BJ (cell line): ENCODE measurements at regions of chr19 and their contacts with region 1.

Region 1: DNA sequence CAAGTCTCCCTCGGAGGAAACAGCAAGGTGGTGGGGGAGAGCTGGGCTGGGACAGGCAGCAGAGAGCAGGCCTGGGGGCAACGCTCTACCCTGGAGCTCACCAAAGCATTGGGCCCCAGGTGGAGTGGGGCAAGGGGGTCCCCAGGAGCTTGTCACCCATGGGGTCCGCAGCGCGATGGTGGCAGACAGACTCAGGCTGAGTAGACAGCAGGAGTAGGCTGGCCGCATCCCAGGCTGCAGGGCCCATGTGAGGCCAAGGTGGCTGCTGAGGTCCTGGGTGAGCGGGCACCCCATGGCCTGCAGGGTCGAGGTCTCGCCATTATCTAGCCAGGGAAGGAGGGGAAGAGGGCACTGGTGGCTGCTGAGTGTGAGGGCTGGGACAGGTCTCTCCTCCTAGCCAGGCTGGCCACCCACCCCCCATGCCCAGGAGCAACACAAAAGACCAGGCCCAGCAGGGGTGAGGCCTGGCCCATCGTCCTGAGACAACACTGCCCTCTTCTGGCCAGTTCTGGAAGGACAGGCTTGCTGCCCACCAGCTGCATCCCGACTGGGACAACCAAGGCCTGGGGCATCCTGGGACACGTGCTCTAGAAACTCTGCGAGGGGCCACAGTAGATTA is 33.1 kb downstream of the CEBPG start:
- DNase-seq: no peak
- H3K4me3 ChIP-seq: no peak overlapping the region
- H3K27me3 ChIP-seq: no peaks in the 10 kb centered on the region
- CTCF ChIP-seq: peak; percentile 96

Region 2: DNA sequence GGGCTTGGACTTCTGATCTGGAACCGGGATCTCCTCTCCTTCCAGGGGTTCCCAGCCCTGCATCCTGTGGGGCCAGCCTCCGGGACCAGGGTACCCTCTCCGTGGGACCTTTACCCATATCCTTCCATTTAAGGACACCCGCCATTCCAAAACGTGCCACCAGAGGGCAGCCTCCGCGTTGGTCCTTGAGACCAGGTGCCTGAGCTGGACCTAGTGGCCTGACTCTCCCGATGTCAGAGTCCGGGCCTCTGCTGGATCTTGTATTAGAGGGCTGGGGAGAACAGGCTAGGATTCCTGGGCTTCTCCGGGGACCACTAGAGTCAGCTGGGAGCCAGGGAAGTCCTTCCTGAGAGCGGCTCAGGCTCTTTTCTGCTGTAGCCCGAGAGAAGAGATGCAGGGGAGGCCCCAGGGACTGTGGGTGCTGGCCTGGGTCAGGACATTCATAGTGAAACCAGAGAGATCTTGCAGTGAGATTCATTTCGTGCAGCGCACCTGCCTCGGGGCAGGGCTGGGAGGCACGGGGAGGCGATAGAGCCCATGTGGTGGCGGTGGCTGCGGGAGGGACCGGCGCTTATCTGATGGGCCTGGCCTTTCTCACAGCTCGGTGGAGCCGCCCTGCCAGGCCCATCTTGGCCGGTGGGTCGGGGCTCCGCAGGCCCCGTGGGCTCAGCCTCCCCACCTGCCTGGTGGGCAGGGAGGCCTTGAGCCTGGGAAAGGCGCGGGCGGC is 171.2 kb before region 1 on chr19:
- CTCF ChIA-PET with region 1: interaction called, 405 read pairs
- POLR2A ChIA-PET with region 1: no interaction called
- DNase-seq: no peak
- H3K4me3 ChIP-seq: no peak overlapping the region
- H3K27me3 ChIP-seq: peaks cover 6% of the 10 kb centered on the region; the same call in 1 of the 2 replicates
- CTCF ChIP-seq: peak; percentile 92

Region 3: DNA sequence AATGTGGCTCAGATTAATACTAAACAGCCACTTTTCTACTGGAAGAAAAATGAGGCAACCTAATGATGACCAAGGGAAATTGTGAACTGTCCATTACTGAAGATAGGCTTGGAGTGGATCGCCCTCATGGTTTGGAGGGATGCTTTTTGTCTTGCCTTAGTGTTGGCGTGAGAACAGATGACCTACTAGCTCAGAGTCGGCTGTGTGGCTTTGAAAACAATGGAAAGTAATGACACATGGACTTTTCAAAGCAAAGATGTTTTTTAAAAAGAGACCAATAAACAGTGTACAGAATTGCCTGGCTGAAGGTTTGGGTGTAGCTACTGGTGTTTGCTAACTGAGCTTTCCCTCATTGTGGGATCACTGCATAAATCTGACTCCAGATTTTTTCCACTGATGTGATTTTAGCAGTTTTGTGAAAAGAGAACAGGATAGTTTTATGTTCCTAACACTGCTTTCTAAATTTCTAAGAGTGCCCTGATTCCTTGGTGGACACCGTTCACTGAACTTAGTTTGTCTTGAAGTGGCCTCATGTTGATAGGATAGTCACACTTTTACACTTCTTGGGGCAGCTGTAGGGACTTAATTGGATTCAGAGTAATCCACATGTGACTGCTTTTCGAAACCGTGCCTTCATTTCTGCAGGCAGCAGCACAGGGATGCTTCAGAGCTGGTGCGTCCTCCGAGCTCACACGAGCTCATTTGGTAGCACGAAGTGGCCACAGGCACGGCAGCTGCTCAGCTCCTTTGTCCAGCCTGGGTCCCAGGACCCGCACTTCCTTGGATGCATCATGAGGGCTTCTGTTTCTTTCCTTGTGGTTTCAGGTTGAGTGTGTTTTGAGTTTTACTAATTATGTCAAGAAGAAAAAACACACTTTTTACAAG is 28.8 kb before region 1 on chr19:
- CTCF ChIA-PET with region 1: interaction called, 15 read pairs
- POLR2A ChIA-PET with region 1: no interaction called
- DNase-seq: no peak
- H3K4me3 ChIP-seq: no peak overlapping the region
- H3K27me3 ChIP-seq: no peaks in the 10 kb centered on the region
- CTCF ChIP-seq: no peak

Region 4: DNA sequence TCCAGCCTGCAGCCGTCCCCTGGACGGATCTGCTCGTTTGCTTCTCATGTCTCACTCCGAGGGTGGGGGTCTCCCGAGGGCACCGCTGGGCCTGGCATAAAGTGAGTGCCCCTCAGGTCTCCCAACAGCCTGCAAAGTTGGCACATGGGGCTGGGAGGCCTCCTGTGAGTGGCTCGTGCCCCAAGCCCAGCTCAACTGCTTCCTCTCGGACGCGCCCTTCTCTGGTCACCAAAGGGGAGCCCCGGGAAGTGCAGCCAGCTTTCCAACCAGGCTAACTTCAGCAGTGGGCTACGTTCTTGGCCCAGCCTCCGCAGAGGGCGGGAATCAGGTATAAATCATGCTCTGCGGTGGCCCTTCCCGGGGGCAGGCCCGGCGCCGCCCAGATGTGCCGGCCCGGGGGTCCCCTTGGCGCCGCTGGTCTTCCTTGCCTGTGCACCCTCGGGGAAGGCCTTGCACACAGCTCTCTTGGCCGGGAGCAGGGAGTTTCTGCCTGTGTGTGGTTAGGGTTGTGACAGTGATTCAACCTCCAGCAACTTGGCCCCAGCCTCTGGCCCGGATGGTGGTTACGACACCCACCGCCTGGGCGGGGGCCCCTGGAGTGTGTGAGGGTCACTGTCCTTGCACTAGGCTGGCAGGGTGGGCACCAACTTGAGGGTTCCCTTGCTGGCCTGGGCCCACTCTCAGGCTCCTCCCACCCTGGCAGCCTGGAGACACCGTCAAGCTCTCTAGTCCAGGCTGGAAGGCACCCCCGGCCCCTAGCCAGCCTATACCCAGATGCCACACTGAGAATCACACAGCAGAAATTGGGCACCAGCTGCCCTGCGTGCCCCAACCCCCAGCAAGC is 12.4 kb before region 1 on chr19:
- CTCF ChIA-PET with region 1: interaction called, 23 read pairs
- POLR2A ChIA-PET with region 1: no interaction called
- DNase-seq: no peak
- H3K4me3 ChIP-seq: no peak overlapping the region
- H3K27me3 ChIP-seq: no peaks in the 10 kb centered on the region
- CTCF ChIP-seq: no peak

Region 5: GRCh38 chr19:33496038-33496895 is 89.6 kb after region 1 on chr19:
- CTCF ChIA-PET with region 1: no interaction called
- POLR2A ChIA-PET with region 1: no interaction called
- DNase-seq: no peak
- H3K4me3 ChIP-seq: no peak overlapping the region
- H3K27me3 ChIP-seq: no peaks in the 10 kb centered on the region
- CTCF ChIP-seq: no peak